ENCODE measurements at regions of chr15 and their contacts with region 1.

Region 1: DNA sequence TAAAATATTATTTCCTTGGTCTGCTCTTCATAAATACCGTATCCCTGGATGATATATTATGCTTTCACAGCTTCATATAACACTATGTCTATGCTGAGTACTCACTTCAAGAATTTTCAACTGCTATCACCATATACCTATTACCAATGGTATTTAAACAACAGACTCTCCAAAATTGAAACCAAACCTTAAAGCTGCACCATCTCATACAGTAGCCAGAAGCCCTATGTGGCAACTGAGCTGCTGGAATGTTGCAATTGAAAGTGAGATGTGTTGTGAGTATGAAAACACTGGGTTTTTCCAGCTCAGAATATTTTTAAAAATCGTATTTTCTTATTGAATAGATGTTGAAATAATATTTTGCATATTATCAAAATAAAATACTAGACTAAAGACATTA is 130.1 kb upstream of the GOLGA6L6 start:
- DNase-seq: no peak
- ATAC-seq: peak; percentile 45
- H3K4me3 ChIP-seq: no peak overlapping the region
- H3K27ac ChIP-seq: no peak overlapping the region
- H3K4me1 ChIP-seq: no peaks in the 10 kb centered on the region
- H3K27me3 ChIP-seq: no peaks in the 10 kb centered on the region
- CTCF ChIP-seq: no peak
- EP300 ChIP-seq: no peak
- POLR2A ChIP-seq: no peak
- RAD21 ChIP-seq: no peak

Region 2: GRCh38 chr15:20652914-20653313 is 18.8 kb before region 1 on chr15:
- CTCF ChIA-PET with region 1: no interaction called
- POLR2A ChIA-PET with region 1: no interaction called
- in situ Hi-C with region 1: no loop called
- intact Hi-C with region 1: no loop called
- DNase-seq: no peak
- ATAC-seq: no peak
- H3K4me3 ChIP-seq: no peak overlapping the region
- H3K27ac ChIP-seq: no peak overlapping the region
- H3K4me1 ChIP-seq: no peaks in the 10 kb centered on the region
- H3K27me3 ChIP-seq: no peaks in the 10 kb centered on the region
- CTCF ChIP-seq: no peak
- EP300 ChIP-seq: no peak
- POLR2A ChIP-seq: no peak
- RAD21 ChIP-seq: no peak

Region 3: GRCh38 chr15:21261965-21262850 is 590.5 kb after region 1 on chr15:
- CTCF ChIA-PET with region 1: no interaction called
- POLR2A ChIA-PET with region 1: no interaction called
- in situ Hi-C with region 1: loop called (anchors 5 kb)
- intact Hi-C with region 1: no loop called
- DNase-seq: peak in 1 of 4 experiments; percentile 17
- ATAC-seq: peak; percentile 10; the same call in 2 of the 3 replicates
- H3K4me3 ChIP-seq: no peak overlapping the region
- H3K27ac ChIP-seq: no peak overlapping the region
- H3K4me1 ChIP-seq: peaks cover 0 to 6% of the 10 kb centered on the region in 2 experiments; a peak in 1 of 5 replicates
- H3K27me3 ChIP-seq: peaks cover 14 to 22% of the 10 kb centered on the region in 2 experiments; a peak in 3 of 5 replicates
- CTCF ChIP-seq: no peak
- EP300 ChIP-seq: no peak
- POLR2A ChIP-seq: no peak
- RAD21 ChIP-seq: no peak